Mucosa of descending colon (tissue), 3 donors: ENCODE measurements at regions of chr10 and their contacts with region 1.

Region 1: GRCh38 chr10:69318106-69318866 is 40.0 kb downstream of the HK1 start:
- DNase-seq: peak; percentile 91 to 96 (median 96)
- ATAC-seq: peak; percentile 92
- H3K4me3 ChIP-seq: peak overlapping the region; percentile 58
- H3K4me1 ChIP-seq: peaks cover 29% of the 10 kb centered on the region
- CTCF ChIP-seq: no peak

Region 2: DNA sequence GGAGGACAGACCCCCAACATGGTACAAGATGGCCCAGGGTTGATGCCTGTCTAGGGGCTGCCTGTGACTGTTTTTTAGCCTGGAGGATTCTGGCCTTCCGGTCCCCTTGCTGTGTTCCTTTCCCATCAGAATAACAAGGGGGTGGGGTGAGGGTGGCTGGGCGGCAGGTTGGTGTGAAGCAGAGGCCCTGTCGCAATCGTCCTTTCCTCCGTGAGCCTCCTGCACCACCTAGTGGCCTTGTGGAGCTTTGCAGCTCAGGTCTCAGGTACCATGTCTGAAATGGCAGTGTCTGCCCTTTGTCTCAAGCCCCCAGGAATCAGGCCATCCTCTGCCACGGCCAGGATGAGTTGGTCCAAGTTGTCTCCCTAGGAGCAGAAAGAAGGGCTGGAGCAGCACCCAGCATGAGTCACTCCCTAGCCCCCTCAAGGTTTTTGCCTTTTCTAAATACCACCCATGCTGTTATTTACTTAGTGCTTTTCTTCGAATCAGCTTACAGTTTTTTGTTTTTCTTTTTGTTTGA is 74.3 kb after region 1 on chr10:
- intact Hi-C with region 1: loop called in 1 of 2 experiments (anchors 10 kb)
- DNase-seq: peak; percentile 85 to 89 (median 86)
- ATAC-seq: peak; percentile 99
- H3K4me3 ChIP-seq: no peak overlapping the region
- H3K4me1 ChIP-seq: no peaks in the 10 kb centered on the region
- CTCF ChIP-seq: peak; percentile 81

Region 3: DNA sequence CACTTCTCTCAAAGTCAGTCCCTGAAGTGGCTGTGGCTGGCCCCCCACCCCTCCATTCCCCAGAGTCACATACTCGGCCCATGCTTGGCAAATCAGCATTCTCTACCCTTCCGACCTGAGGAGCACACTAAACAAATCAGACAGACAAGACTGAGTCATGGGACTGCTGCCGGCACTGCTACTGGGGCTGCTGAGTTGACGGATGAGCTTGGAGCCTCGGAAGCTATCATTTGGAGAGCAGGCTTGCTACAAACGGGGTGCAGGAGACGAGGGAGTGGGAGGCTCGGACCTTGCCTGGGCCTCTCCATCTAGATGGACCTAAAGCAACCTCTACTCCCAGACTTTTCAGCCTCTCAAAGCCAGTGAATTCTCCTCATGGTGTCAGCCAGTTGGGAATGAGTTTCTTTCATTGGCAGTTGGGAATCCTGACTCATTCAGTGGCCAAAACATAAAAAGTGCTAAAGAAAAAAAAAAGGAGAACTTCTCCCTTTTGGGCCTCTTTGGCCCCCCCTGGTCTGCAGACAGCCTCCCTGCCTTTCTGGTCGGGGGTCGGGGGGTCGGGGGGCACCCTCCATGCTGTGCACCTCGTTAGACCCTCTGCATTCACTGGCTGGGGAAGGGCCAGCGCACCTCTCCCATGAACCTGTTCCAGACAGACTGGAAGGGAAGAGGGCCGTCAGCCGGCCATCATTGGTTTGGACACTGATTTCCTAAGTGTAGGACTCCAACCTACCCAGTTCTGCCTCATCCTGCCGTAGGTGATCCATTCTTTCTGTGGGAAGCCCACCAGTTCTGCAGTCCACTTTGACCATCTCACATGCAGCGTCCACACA is 431.1 kb after region 1 on chr10:
- intact Hi-C with region 1: no loop called
- DNase-seq: no peak
- ATAC-seq: no peak
- H3K4me3 ChIP-seq: no peak overlapping the region
- H3K4me1 ChIP-seq: no peaks in the 10 kb centered on the region
- CTCF ChIP-seq: no peak